T-cell (primary cell): ENCODE measurements at regions of chr11 and their contacts with region 1.

Region 1: DNA sequence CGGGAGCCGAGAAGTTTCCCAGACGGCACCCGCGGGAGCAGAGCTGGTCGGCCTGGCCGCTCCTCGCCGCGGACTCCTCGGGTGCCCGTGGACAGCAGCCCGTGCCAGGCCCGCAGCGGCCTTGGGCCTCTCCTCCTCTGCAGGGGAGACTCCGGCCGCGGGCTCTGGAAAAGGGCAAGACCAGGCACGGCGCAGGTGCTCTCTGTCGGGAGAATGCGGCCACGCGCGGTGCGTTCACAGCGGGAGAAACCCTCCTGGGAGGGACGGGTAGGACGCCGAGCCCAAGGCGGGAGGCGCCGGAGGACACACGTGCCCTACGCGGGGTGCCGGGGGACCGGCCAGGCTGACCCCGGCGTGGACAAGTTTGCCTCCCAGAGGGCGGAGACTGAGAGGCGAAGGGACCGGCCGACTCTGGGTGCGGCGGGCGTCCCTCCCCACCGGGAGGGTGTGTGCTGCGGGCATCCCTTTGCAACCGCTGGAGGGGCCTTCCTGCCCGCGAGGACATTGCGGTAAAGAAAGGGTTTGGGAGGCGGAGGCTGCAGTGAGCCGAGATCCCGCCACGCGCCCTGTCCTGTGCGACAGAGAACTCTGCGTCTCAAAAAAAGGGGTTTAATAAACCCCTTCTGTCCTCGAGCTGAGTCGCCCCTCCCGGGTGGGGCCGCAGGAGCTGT is 2.3 kb downstream of the IFITM1 start:
- DNase-seq: peak in 4 of 35 experiments; percentile 29 to 56 (median 43)
- ATAC-seq: no peak
- H3K4me3 ChIP-seq: peak overlapping the region; percentile 87 to 99
- H3K4me3 Mint-ChIP-seq: peak overlapping the region; percentile 83 to 94 (median 91)
- H3K27ac ChIP-seq: peak overlapping the region; percentile 76
- H3K27ac Mint-ChIP-seq: peak overlapping the region; percentile 95 to 98
- H3K4me1 ChIP-seq: peaks cover 8 to 64% of the 10 kb centered on the region in 2 experiments
- H3K4me1 Mint-ChIP-seq: peaks cover 43 to 58% (median 53%) of the 10 kb centered on the region in 3 donors
- H3K27me3 ChIP-seq: peaks cover 0 to 5% of the 10 kb centered on the region in 2 experiments
- H3K27me3 Mint-ChIP-seq: no peaks in the 10 kb centered on the region

Region 2: DNA sequence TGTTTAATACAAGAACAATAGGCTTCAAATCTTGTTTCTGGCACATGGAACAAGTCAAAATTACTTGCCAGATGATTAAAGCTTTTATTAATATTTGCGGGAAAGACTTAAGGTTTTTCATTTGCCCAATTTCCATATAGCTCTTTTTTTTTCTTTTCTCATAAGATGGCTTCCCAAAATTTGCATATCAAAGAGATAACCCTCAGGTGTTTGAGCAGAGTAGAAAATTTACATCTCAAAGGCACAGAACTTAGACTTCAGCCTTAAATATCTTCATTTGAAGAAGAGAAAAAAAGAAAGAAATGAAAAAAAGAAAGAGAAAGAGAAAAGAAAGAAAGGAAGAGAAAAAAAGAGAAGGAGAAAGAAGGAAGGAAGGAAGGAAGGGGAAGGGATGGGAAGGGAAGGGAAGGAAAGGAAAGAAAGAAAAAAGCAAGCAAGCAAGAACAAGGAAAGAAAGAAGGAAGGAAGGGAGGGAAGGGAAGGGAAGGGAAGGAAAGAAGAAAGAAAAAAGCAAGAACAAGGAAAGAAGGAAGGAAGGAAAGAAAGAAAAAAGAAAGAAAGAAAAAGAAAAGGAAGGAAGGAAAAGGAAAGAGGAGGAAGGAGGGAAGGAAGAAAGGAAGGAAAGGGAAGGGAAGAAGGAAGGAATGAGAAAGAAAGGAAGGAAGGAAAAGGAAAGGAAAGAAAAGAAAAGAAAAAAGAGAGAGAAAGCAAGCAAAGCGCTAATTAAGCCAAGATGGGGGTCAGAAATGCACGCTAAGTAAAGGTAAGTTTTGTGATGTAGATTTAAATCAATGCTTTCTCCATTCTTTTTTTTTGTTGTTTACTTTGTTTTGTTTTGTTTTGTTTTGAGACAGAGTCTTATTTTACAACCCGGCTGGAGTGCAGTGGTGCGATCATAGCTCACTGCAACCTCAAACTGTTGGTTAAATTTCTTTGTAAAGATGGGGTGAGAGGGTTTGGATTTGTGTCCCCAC is 24.7 kb after region 1 on chr11:
- CTCF ChIA-PET with region 1: interaction called, 9 to 10 read pairs
- POLR2A ChIA-PET with region 1: no interaction called
- DNase-seq: no peak
- ATAC-seq: no peak
- H3K4me3 ChIP-seq: no peak overlapping the region
- H3K4me3 Mint-ChIP-seq: no peak overlapping the region
- H3K27ac ChIP-seq: no peak overlapping the region
- H3K27ac Mint-ChIP-seq: no peak overlapping the region
- H3K4me1 ChIP-seq: peaks cover 15 to 16% of the 10 kb centered on the region in 2 experiments
- H3K4me1 Mint-ChIP-seq: peaks cover 20 to 33% (median 33%) of the 10 kb centered on the region in 3 donors
- H3K27me3 ChIP-seq: no peaks in the 10 kb centered on the region
- H3K27me3 Mint-ChIP-seq: peaks cover 0 to 1% of the 10 kb centered on the region in 2 donors

Region 3: DNA sequence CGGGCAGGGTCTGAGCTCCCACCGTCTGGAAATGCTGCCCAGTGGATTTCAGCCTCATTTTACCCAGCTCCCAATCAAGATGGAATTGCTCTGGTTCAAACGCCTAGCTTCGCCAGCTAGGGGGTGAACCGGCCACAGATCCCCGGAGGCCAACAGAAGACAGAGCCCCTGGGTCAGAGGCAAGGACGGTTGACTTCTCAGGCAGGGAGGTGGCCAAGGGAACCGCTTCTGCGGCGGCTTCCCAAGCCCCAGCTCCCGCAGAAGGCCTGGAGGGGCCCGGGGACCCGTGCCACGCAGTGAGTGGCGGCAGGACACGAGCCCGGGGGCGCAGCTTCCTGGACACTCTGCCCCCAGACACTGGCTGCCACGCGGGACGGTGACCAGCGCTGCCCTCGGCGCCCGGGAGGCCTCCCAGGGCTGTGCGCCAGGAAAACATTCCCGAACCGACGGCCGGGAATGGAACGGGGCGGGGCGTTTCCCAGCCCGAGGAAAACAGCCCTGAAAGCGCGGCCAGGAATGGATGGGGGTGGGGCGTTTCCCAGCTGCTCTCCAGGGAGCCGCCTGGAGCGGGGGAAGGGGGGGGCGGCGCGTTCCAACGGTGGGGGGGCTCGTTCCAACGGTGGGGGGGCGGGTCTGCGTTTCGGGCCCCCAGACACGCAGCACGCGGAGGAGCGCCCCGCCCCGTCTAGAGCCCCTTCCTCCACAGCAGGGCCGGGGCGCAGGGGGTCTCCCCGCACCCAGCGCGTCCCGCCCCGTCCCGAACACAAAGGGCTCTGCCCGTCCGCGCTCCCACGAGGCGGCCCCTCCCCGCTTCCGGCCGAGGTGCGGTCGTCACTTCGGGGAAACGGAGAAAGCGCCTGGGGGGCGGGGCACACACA is 39.7 kb after region 1 on chr11:
- CTCF ChIA-PET with region 1: interaction called, 3 to 11 read pairs
- POLR2A ChIA-PET with region 1: interaction called in 1 of 2 experiments, 6 read pairs
- DNase-seq: peak; percentile 53 to 93 (median 87)
- ATAC-seq: peak; percentile 67 to 82 (median 68)
- H3K4me3 ChIP-seq: peak overlapping the region; percentile 55 to 71
- H3K4me3 Mint-ChIP-seq: peak overlapping the region in 2 of 3 donors; percentile 75 to 79
- H3K27ac ChIP-seq: peak overlapping the region; percentile 95
- H3K27ac Mint-ChIP-seq: peak overlapping the region; percentile 92 to 96
- H3K4me1 ChIP-seq: peaks cover 12 to 64% of the 10 kb centered on the region in 2 experiments
- H3K4me1 Mint-ChIP-seq: peaks cover 43 to 46% (median 46%) of the 10 kb centered on the region in 3 donors
- H3K27me3 ChIP-seq: no peaks in the 10 kb centered on the region
- H3K27me3 Mint-ChIP-seq: no peaks in the 10 kb centered on the region